ENCODE measurements at regions of chr1 and their contacts with region 1.

Region 1: GRCh38 chr1:241074507-241074906 is 282.5 kb downstream of the RGS7 start:
- DNase-seq: no peak
- H3K4me3 Mint-ChIP-seq: no peak overlapping the region
- H3K27ac Mint-ChIP-seq: no peak overlapping the region
- H3K4me1 Mint-ChIP-seq: no peaks in the 10 kb centered on the region
- H3K27me3 Mint-ChIP-seq: no peaks in the 10 kb centered on the region
- CTCF ChIP-seq: no peak

Region 2: DNA sequence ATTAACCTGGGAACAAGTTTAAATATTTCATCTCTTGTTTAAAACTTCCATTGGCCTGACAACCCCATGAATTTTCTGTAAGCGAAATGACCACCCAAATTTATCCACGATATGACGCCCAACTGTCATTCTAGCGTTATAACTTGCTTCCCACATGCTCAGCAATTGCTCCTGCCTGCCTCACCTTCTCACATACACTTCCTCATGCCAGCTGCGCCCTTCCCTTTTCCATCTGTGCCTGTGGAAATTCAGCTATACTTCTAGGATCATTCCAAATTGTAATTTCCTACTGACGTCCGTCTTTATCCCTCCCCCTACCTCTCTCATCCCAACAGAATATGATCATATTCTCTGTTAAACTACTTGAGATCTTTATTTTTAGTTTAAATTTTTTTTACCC is 34.5 kb after region 1 on chr1:
- CTCF ChIA-PET with region 1: interaction called, 4 read pairs
- intact Hi-C with region 1: loop called (anchors 1 kb)
- DNase-seq: no peak
- H3K4me3 Mint-ChIP-seq: no peak overlapping the region
- H3K27ac Mint-ChIP-seq: peak overlapping the region; percentile 21
- H3K4me1 Mint-ChIP-seq: peaks cover 21% of the 10 kb centered on the region
- H3K27me3 Mint-ChIP-seq: no peaks in the 10 kb centered on the region
- CTCF ChIP-seq: no peak

Region 3: GRCh38 chr1:241140670-241141069 is 66.2 kb after region 1 on chr1:
- CTCF ChIA-PET with region 1: no interaction called
- intact Hi-C with region 1: no loop called
- DNase-seq: no peak
- H3K4me3 Mint-ChIP-seq: no peak overlapping the region
- H3K27ac Mint-ChIP-seq: no peak overlapping the region
- H3K4me1 Mint-ChIP-seq: peaks cover 10% of the 10 kb centered on the region
- H3K27me3 Mint-ChIP-seq: no peaks in the 10 kb centered on the region
- CTCF ChIP-seq: no peak

Measured in Calu3 (cell line).